Mammary epithelial cell (primary cell): ENCODE measurements at regions of chr5 and their contacts with region 1.

Region 1: DNA sequence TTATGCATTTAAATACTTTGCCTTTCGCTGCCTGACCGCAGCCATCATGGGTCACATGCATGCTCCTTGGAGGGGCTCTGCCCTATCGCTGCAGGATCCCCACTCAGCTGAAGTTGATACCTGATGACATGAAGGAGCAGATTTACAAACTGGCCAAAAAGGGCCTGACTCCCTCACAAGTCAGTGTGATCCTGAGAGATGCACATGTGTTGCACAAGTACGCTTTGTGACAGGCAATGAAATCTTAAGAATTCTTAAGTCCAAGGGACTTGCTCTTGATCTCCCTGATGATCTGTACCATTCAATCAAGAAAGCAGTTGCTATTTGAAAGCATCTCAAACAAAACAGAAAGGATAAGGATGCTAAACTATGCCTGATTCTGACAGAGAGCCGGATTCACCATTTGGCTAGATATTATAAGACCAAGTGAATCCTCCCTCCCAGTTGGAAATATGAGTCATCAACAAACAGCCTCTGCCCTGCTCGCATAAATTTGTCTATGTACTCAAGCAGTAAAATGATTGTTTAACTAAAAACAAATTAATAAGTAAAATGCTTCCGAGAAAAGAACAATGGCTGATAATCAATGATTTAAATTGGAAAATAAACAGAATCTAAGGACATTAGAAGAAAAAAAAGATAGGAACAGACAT is 41.6 kb upstream of the PPP2CA start:
- DNase-seq: no peak
- H3K4me3 ChIP-seq: no peak overlapping the region
- H3K27ac ChIP-seq: no peak overlapping the region
- H3K4me1 ChIP-seq: peaks cover 3% of the 10 kb centered on the region
- H3K27me3 ChIP-seq: no peaks in the 10 kb centered on the region
- CTCF ChIP-seq: no peak

Region 2: GRCh38 chr5:134209477-134210240 is 57.8 kb before region 1 on chr5:
- CTCF ChIA-PET with region 1: no interaction called
- dilution Hi-C with region 1: loop called (anchors 5 kb)
- in situ Hi-C with region 1: no loop called
- intact Hi-C with region 1: no loop called
- DNase-seq: no peak
- H3K4me3 ChIP-seq: no peak overlapping the region
- H3K27ac ChIP-seq: no peak overlapping the region
- H3K4me1 ChIP-seq: no peaks in the 10 kb centered on the region
- H3K27me3 ChIP-seq: no peaks in the 10 kb centered on the region
- CTCF ChIP-seq: no peak

Region 3: GRCh38 chr5:134637161-134637582 is 369.7 kb after region 1 on chr5:
- CTCF ChIA-PET with region 1: no interaction called
- dilution Hi-C with region 1: no loop called
- in situ Hi-C with region 1: no loop called
- intact Hi-C with region 1: no loop called
- DNase-seq: peak; percentile 61
- H3K4me3 ChIP-seq: no peak overlapping the region
- H3K27ac ChIP-seq: no peak overlapping the region
- H3K4me1 ChIP-seq: no peaks in the 10 kb centered on the region
- H3K27me3 ChIP-seq: no peaks in the 10 kb centered on the region
- CTCF ChIP-seq: no peak